HCT116 (cell line): ENCODE measurements at regions of chr13 and their contacts with region 1.

Region 1: DNA sequence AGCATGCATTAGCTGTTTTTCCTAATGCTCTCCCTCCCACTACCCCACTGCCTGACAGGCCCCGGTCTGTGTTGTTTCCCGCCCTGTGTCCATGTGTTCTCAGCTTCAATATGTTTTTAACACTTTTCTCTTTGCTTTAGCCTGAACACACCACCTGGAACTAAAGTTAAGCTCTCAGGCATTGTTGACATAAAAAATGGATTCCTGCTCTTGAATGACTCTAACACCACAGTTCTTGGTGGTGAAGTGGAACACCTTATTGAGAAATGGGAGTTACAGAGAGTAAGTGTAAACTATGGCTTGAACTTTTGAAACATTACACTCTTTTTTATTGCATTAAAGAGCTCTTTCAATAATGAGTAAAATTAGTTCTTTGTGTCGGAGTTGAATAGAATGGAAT is 70.1 kb downstream of the TDRD3 start:
- DNase-seq: no peak
- ATAC-seq: no peak
- H3K4me3 ChIP-seq: no peak overlapping the region
- H3K27ac ChIP-seq: no peak overlapping the region
- H3K4me1 ChIP-seq: no peaks in the 10 kb centered on the region
- H3K27me3 ChIP-seq: no peaks in the 10 kb centered on the region
- CTCF ChIP-seq: no peak
- POLR2A ChIP-seq: no peak
- RAD21 ChIP-seq: no peak

Region 2: GRCh38 chr13:60617991-60618733 is 151.1 kb after region 1 on chr13:
- CTCF ChIA-PET with region 1: interaction called, 13 read pairs
- POLR2A ChIA-PET with region 1: no interaction called
- RAD21 ChIA-PET with region 1: no interaction called
- intact Hi-C with region 1: no loop called
- DNase-seq: no peak
- ATAC-seq: peak; percentile 72
- H3K4me3 ChIP-seq: no peak overlapping the region
- H3K27ac ChIP-seq: no peak overlapping the region
- H3K4me1 ChIP-seq: no peaks in the 10 kb centered on the region
- H3K27me3 ChIP-seq: peaks cover 7% of the 10 kb centered on the region
- CTCF ChIP-seq: peak; percentile 36 to 41 (median 40); a peak in 4 of 6 replicates
- POLR2A ChIP-seq: no peak
- RAD21 ChIP-seq: peak; percentile 48